OCI-LY7 (cell line): ENCODE measurements at regions of chr15 and their contacts with region 1.

Region 1: DNA sequence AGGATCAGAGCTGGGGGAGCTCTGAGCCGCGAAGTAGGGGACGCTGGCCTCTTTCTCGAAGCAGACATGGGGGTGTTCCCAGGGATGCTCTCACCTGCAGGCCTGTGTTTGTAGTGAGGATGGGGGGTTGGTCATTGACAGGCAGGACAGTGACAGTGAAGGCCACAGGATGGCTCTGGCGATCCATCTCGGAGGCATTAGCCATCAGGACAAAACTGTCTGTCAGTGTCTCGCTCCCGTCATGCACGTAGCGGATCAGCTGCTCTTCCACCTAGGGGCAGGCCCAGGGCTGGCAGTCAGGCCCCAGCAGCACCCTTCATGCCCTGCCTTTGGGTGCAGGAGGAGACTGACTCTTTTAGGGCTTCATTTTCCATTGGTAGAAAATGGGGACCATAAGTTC is 28.0 kb downstream of the CSPG4 start:
- DNase-seq: no peak
- H3K4me3 ChIP-seq: no peak overlapping the region
- H3K27ac ChIP-seq: no peak overlapping the region
- H3K4me1 ChIP-seq: no peaks in the 10 kb centered on the region
- CTCF ChIP-seq: no peak

Region 2: GRCh38 chr15:75367913-75368688 is 316.5 kb before region 1 on chr15 and contains the start of gene MAN2C1:
- CTCF ChIA-PET with region 1: interaction called, 5 read pairs
- POLR2A ChIA-PET with region 1: no interaction called
- intact Hi-C with region 1: loop called (anchors 1 kb)
- DNase-seq: peak; percentile 99
- H3K4me3 ChIP-seq: peak within 1 kb of the TSS; percentile 77
- H3K27ac ChIP-seq: peak within 1 kb of the TSS; percentile 88
- H3K4me1 ChIP-seq: peaks cover 23% of the 10 kb centered on the region
- CTCF ChIP-seq: peak; percentile 89
- total RNA-seq, gene MAN2C1: 98.8 and 113 TPM in 2 replicates

Region 3: DNA sequence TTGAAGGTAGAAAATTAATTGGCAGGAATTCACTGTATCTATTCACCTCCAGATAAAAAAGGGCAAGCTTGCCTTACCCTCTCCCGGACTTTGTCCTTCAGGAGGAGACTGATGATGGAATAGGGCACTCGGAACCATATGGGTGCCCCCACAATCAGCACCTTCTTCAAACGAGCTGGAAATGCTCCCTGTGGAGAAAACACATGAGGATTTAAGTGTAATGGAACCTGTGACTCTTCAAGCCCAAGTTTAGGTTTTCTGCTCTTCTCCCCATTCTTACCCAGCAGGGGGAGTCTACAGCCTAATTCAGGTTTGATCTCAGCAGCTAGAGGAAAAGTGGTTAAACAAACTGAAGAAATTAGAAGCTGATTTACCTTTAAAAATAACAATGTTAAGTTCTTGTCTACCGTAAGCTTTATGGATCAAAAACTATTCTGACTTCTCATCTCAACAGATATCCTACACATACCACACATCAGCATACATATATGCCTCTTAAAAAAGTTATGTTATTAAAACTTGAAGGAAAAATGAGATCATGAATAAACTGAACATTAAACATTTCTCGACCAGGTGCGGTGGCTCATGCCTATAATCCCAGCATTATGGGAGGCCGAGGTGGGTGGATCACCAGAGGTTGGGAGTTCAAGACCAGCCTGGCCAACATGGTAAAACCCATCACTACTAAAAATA is 175.7 kb before region 1 on chr15:
- CTCF ChIA-PET with region 1: no interaction called
- POLR2A ChIA-PET with region 1: no interaction called
- intact Hi-C with region 1: loop called (anchors 5 kb)
- DNase-seq: peak; percentile 48
- H3K4me3 ChIP-seq: no peak overlapping the region
- H3K27ac ChIP-seq: no peak overlapping the region
- H3K4me1 ChIP-seq: no peaks in the 10 kb centered on the region
- CTCF ChIP-seq: peak; percentile 76

Region 4: DNA sequence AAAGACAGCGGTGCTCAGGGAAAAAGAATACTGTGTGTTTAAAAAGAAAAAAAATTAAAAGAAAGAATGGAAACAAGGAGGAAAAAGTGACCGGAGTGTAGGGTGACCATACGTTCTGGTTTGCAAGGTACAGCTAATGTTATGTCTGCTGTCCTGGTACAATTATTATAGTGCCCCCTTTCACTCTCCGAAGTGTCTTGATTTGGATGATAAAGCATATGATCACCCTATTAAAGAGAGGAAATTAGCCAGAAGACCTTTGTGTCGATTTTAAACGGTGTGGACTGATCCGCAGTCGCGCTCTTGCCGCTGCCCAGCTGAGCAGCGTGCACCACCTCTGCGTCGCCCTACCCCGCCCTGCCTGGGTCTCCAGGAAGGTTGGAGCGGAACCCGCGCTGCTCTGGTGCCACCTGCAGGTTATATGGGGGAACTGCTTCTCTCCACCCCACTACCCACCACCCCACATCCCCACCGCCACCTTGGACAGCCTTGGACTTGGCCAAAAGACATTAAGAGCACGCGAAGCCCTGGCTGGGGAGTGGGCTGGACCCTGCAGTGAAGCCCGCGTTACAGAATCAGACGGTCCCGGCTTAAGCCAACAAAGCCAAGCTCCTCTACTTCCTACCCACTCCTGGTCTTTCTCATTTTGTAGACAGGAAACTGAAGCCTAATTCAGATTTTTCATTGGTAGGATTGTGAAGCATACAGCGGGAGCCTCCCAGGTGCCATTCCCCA is 117.4 kb after region 1 on chr15:
- CTCF ChIA-PET with region 1: no interaction called
- POLR2A ChIA-PET with region 1: no interaction called
- intact Hi-C with region 1: loop called (anchors 2 kb)
- DNase-seq: peak; percentile 71
- H3K4me3 ChIP-seq: no peak overlapping the region
- H3K27ac ChIP-seq: no peak overlapping the region
- H3K4me1 ChIP-seq: no peaks in the 10 kb centered on the region
- CTCF ChIP-seq: peak; percentile 84

Region 5: GRCh38 chr15:76035593-76035992 is 351.0 kb after region 1 on chr15:
- CTCF ChIA-PET with region 1: no interaction called
- POLR2A ChIA-PET with region 1: no interaction called
- intact Hi-C with region 1: no loop called
- DNase-seq: no peak
- H3K4me3 ChIP-seq: no peak overlapping the region
- H3K27ac ChIP-seq: no peak overlapping the region
- H3K4me1 ChIP-seq: no peaks in the 10 kb centered on the region
- CTCF ChIP-seq: no peak